Transverse colon (tissue), 4 donors: ENCODE measurements at regions of chr1 and their contacts with region 1.

Region 1: GRCh38 chr1:112466078-112466660 is 42.6 kb upstream of the WNT2B start:
- DNase-seq: peak; percentile 96
- H3K4me3 ChIP-seq: peak overlapping the region; percentile 15 to 47 (median 22)
- H3K27ac ChIP-seq: peak overlapping the region; percentile 46 to 85 (median 74)
- H3K4me1 ChIP-seq: peaks cover 5 to 30% (median 15%) of the 10 kb centered on the region in 4 donors
- H3K27me3 ChIP-seq: no peaks in the 10 kb centered on the region
- CTCF ChIP-seq: peak; percentile 80 to 97 (median 82)
- EP300 ChIP-seq: no peak
- POLR2A ChIP-seq: peak; percentile 41

Region 2: DNA sequence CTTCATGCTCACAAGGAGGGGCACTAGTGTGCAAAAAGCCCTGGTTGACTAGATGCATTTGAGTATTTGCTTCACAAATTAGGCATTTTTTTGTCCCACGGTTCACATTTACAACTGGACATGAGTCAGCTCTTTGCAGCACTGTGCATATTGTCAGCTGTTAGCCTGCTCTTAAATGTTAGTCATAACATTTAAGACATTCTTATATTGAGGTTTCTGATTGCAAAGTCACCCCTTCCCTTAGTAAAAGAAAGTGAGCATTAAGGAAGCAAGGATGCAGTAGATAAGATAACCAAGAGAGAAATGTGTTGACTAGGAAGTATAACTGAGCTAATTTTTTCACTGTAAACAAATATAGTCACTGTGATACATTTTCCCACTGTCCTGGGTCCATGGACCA is 202.7 kb before region 1 on chr1:
- in situ Hi-C with region 1: no loop called
- intact Hi-C with region 1: no loop called
- DNase-seq: no peak
- H3K4me3 ChIP-seq: no peak overlapping the region
- H3K27ac ChIP-seq: peak overlapping the region in 3 of 4 donors; percentile 40 to 73 (median 64)
- H3K4me1 ChIP-seq: peaks cover 0 to 6% (median 2%) of the 10 kb centered on the region in 4 donors
- H3K27me3 ChIP-seq: no peaks in the 10 kb centered on the region
- CTCF ChIP-seq: no peak
- EP300 ChIP-seq: no peak
- POLR2A ChIP-seq: no peak

Region 3: GRCh38 chr1:112390775-112391602 is 75.2 kb before region 1 on chr1:
- in situ Hi-C with region 1: loop called in 2 of 4 experiments (anchors 5 to 10 kb)
- intact Hi-C with region 1: loop called (anchors 2 kb)
- DNase-seq: peak; percentile 95
- H3K4me3 ChIP-seq: peak overlapping the region in 3 of 4 donors; percentile 25 to 51 (median 34)
- H3K27ac ChIP-seq: peak overlapping the region; percentile 89 to 97 (median 92)
- H3K4me1 ChIP-seq: peaks cover 9 to 48% (median 39%) of the 10 kb centered on the region in 4 donors
- H3K27me3 ChIP-seq: no peaks in the 10 kb centered on the region
- CTCF ChIP-seq: peak; percentile 87 to 99 (median 92)
- EP300 ChIP-seq: no peak
- POLR2A ChIP-seq: peak; percentile 48

Region 4: DNA sequence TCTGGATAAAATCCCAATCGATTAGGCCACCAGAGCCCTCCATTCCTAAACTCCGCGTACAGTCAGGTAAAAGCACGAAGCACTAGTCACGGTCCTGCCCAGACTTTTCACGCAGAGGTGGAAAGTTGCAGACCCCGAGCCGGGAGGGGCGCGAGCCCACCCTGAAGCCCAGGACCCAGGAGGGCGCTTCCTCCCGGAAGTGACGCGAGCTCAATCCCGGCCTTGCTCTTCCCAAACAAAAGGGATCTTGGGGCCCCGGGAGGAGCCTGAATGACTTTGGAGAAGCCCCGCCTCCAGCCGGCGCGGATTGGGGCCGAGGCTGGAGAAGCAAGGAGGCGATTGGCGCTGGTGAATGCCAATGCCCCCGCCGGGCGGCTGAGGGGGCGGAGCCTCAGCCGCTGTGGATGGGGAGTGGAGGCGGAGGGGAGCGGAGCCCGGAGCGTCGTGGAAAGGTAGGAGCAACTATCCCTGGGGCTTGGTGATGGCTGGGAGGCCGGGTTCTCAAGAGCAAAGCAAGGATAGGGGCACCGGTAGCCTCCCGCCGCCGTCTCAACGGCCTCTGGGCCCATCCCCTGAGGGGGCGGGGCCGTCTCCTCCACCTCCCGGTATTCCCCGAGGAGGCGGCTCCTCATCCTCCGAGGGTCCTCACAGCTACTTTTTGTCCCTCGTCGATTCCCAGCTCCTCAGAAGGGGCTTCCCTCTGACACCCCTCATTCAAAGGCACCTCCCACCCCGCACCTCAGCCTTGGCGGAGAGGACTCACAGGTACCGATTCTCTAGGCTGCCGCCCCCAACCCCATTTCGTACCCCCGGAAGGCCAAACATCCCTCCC is 70.1 kb before region 1 on chr1 and contains the start of gene CTTNBP2NL:
- in situ Hi-C with region 1: loop called in 2 of 4 experiments (anchors 5 kb)
- intact Hi-C with region 1: no loop called
- DNase-seq: peak; percentile 97
- H3K4me3 ChIP-seq: peak within 1 kb of the TSS; percentile 85 to 94 (median 91)
- H3K27ac ChIP-seq: peak within 1 kb of the TSS; percentile 91 to 97 (median 94)
- H3K4me1 ChIP-seq: peaks cover 9 to 73% (median 60%) of the 10 kb centered on the region in 4 donors
- H3K27me3 ChIP-seq: no peaks in the 10 kb centered on the region
- CTCF ChIP-seq: no peak
- EP300 ChIP-seq: no peak
- POLR2A ChIP-seq: peak; percentile 87
- total RNA-seq, gene CTTNBP2NL: 44.6 to 64.8 (median 52.4) TPM

Region 5: DNA sequence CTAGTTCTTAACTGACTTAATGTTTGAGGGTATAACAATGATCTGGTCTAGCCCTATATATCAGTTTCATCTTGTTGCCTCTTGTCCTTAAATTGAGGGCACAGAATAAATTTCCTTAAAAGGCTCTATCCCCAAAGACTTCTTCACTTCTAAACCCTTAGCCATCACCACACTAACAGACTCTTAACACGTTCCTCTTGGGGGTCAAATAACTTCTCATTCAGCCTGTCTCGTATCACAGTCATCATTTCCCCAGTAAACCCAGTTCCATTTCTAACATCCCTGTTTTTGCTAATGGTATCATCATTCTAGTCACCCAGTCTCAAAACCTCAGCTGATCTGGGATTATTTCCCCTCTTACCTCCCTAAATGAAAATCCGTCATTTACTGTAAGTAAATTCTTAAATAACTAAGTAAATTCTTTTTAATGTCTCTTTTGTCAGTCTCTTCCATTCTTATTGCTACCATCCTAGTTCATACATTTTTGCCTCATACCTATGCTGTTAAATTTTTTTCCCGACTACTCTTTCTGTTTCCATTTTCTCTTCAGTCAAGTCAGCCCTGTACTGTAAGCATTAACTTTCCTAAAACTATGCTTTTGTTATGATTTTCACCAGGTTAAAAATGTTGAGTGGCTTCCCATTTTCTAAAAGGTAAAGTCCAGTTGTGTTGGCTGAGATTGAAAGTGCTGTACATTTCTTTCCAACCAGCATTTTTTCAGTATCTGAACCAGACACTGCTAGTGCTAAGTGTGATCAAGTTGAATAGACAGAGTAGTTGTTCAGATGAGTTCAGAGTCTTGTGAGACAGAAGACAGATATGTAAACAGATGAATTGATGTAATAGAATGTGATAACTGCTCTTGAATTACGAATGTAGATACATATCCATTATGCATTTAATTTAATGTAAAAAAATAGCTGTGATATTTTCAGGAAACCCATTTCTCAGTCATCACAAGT is 63.2 kb before region 1 on chr1:
- in situ Hi-C with region 1: loop called in 2 of 4 experiments (anchors 5 kb)
- intact Hi-C with region 1: no loop called
- DNase-seq: no peak
- H3K4me3 ChIP-seq: no peak overlapping the region
- H3K27ac ChIP-seq: peak overlapping the region in 3 of 4 donors; percentile 4 to 71 (median 17)
- H3K4me1 ChIP-seq: peaks cover 14 to 88% (median 43%) of the 10 kb centered on the region in 4 donors
- H3K27me3 ChIP-seq: no peaks in the 10 kb centered on the region
- CTCF ChIP-seq: no peak
- EP300 ChIP-seq: no peak
- POLR2A ChIP-seq: no peak